Breast epithelium (tissue), 4 donors: ENCODE measurements at regions of chr11 and their contacts with region 1.

Region 1: GRCh38 chr11:88131764-88132470 is 43.3 kb downstream of the RAB38 start:
- DNase-seq: no peak
- H3K4me3 ChIP-seq: no peak overlapping the region
- H3K27ac ChIP-seq: no peak overlapping the region
- H3K4me1 ChIP-seq: no peaks in the 10 kb centered on the region
- H3K27me3 ChIP-seq: no peaks in the 10 kb centered on the region
- CTCF ChIP-seq: no peak
- POLR2A ChIP-seq: no peak

Region 2: GRCh38 chr11:88100151-88100550 is 31.8 kb before region 1 on chr11:
- intact Hi-C with region 1: loop called (anchors 2 kb)
- DNase-seq: no peak
- H3K4me3 ChIP-seq: no peak overlapping the region
- H3K27ac ChIP-seq: no peak overlapping the region
- H3K4me1 ChIP-seq: no peaks in the 10 kb centered on the region
- H3K27me3 ChIP-seq: no peaks in the 10 kb centered on the region
- CTCF ChIP-seq: no peak
- POLR2A ChIP-seq: no peak